Panc1 (cell line): ENCODE measurements at regions of chr14 and their contacts with region 1.

Region 1: DNA sequence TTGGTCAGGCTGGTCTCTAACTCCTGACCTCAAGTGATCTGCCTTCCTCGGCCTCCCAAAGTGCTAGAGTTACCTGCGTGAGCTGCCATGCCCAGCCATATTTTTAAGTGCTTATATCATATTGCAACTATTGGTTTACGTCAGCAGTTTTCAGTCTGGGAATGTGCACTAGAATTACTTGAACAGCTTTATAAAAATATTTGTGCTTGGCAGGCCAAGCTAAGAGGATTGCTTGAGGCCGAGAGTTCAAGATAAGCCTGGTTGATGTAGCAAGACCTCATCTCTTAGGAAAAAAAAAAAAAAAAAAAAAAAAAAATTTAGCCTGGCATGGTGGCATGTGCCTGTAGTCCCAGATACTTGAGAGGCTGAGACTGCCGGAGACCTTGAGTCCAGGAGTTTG is 17.1 kb downstream of the KIAA0586 start:
- DNase-seq: no peak
- ATAC-seq: no peak
- H3K4me3 ChIP-seq: no peak overlapping the region
- H3K27ac ChIP-seq: no peak overlapping the region
- H3K4me1 ChIP-seq: no peaks in the 10 kb centered on the region
- H3K27me3 ChIP-seq: no peaks in the 10 kb centered on the region
- CTCF ChIP-seq: no peak

Region 2: DNA sequence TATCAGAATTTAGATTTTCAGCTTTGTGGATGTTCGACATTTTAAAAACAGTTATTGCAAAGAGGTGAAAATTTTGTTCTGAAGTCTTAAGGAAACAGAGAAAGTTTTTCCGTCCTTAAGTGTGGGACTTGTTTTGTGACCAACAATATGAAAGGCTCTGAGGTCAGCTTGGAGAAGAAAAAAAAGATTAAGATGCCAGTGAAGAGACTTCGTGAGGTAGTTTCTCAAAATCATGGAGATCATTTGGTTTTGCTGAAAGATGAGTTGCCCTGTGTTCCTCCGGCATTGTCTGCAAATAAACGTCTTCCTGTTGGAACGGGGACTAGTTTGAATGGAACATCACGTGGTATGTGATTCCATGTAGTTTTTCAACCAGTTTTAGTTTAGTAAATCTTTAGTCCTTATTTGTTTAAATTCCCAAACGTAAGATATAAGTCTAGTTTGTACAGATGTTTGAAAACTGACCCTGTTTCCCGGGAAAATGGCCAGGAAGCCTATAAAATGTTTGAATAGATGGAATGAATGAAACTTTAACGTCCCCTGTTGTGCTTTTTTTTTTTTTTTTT is 16.4 kb before region 1 on chr14:
- CTCF ChIA-PET with region 1: no interaction called
- POLR2A ChIA-PET with region 1: interaction called, 15 read pairs
- in situ Hi-C with region 1: no loop called
- intact Hi-C with region 1: no loop called
- DNase-seq: peak; percentile 32
- ATAC-seq: no peak
- H3K4me3 ChIP-seq: peak overlapping the region; percentile 91 to 98
- H3K27ac ChIP-seq: peak overlapping the region; percentile 100
- H3K4me1 ChIP-seq: peaks cover 5% of the 10 kb centered on the region; the same call in 1 of the 2 replicates
- H3K27me3 ChIP-seq: no peaks in the 10 kb centered on the region
- CTCF ChIP-seq: no peak